Caco-2 (cell line): ENCODE measurements at regions of chr20 and their contacts with region 1.

Region 1: DNA sequence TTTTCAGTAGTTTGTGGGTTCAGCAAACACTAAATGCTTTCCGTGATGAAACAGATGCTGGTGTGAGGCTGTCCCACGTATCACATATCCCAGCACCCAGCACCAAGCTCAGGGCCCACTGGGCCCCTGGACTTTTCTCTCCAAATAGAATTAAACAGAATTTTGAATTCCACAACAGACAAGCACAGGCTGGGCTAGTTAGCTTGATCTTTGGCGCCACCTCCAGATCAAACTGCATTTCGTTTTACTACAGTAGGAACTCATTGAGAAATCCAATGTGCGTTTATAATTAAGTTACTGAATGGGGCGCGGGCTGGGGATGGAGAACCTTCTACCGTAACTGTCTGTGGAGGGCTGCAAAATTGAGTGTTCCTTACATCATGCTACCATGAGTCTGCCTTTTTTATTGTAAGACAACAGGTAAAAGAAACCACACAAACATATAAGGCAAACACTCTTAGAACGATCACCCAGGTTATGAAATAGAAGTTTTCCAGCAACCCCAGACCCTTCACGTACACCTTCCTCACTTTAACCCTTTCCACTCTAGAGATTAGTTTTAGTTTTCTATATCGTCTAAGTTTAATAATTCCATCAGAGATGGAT is 107.8 kb downstream of the ZFP64 start:
- DNase-seq: peak; percentile 86 to 87
- H3K4me3 ChIP-seq: no peak overlapping the region
- H3K4me3 Mint-ChIP-seq: no peak overlapping the region
- H3K27ac Mint-ChIP-seq: peak overlapping the region; percentile 23
- H3K4me1 ChIP-seq: peaks cover 11% of the 10 kb centered on the region
- H3K4me1 Mint-ChIP-seq: peaks cover 28% of the 10 kb centered on the region
- H3K27me3 ChIP-seq: no peaks in the 10 kb centered on the region
- H3K27me3 Mint-ChIP-seq: no peaks in the 10 kb centered on the region
- CTCF ChIP-seq: peak; percentile 95 to 96

Region 2: DNA sequence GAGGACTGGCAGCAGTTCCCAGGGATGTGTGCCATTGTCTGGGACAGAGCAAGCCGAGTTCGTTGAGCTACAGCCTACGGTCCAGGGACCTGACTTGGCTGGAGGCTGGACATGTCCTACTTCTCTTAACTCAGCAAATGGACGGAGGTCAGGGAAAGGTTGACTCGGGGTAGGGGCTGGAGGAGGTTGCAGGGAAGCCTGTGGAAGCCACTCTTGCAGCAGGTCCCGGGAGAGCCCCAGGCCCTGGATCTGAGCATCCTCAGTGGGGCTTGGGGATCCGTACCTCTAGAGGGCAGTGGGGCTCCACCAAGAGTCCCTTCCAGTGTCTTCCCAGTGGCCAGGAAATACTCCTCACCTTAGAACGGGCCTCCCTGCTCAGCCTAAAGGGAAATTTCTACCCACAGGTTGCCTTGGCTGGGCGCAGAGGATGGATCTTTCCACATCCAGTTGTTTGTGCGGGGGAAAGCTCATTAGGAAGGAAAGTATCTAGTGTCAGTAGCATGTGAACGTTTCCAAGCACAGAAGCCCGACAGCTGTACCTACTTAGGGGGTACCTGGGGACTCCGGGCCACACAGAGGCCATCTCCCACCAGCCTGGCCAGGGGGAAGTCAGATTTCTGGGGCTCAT is 711.4 kb before region 1 on chr20:
- CTCF ChIA-PET with region 1: interaction called, 4 read pairs
- POLR2A ChIA-PET with region 1: no interaction called
- intact Hi-C with region 1: loop called (anchors 1 kb)
- DNase-seq: peak; percentile 88 to 92
- H3K4me3 ChIP-seq: no peak overlapping the region
- H3K4me3 Mint-ChIP-seq: no peak overlapping the region
- H3K27ac Mint-ChIP-seq: no peak overlapping the region
- H3K4me1 ChIP-seq: peaks cover 14% of the 10 kb centered on the region
- H3K4me1 Mint-ChIP-seq: peaks cover 12% of the 10 kb centered on the region
- H3K27me3 ChIP-seq: no peaks in the 10 kb centered on the region
- H3K27me3 Mint-ChIP-seq: peaks cover 6% of the 10 kb centered on the region
- CTCF ChIP-seq: peak; percentile 99

Region 3: DNA sequence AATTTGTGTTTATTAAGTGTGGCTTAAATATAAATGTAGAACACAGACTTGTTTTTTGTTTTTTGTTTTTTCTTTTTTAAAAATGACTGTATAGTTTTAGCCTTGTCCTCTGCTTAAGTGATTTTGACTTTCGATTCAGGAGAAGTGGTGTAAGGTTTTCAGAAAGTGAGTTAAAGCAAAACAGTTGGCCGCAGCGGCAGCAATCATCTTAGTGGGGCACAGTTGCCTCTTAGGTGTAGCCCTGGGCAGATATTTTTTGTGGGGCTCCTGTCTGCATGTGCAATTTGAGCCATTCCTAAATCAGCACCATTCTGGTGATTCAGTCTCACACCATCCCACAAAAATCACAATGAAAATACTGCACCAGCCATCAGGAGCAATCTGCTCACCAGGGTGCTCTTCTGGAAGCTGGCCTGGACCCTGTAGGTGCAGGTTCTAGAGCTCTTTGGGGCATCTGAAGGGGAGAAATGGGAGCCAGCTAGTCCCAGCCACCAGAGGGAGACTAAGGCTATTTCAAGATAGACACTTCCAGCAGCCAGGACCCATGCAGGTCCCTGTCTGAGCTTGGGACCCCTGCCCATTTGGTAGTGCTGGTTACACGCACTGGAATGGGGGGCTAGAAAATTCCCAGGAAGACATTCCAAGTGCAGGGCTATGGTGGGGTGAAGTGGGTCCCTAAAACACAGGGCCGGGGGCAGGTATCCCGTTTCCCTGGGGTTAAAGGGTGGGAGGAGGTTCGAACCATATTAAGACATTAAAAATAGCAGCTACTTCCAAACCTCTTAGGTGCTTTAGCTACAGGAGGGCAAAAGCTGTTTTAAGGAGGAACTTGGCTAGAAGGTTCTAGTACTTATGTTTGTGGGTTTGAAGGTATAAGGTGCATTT is 697.8 kb before region 1 on chr20:
- CTCF ChIA-PET with region 1: no interaction called
- POLR2A ChIA-PET with region 1: no interaction called
- intact Hi-C with region 1: loop called (anchors 1 kb)
- DNase-seq: peak in 1 of 2 experiments; percentile 68
- H3K4me3 ChIP-seq: no peak overlapping the region
- H3K4me3 Mint-ChIP-seq: no peak overlapping the region
- H3K27ac Mint-ChIP-seq: no peak overlapping the region
- H3K4me1 ChIP-seq: peaks cover 14% of the 10 kb centered on the region
- H3K4me1 Mint-ChIP-seq: peaks cover 20% of the 10 kb centered on the region
- H3K27me3 ChIP-seq: no peaks in the 10 kb centered on the region
- H3K27me3 Mint-ChIP-seq: no peaks in the 10 kb centered on the region
- CTCF ChIP-seq: peak; percentile 81 to 88

Region 4: GRCh38 chr20:51624157-51624731 is 459.5 kb before region 1 on chr20:
- CTCF ChIA-PET with region 1: no interaction called
- POLR2A ChIA-PET with region 1: no interaction called
- intact Hi-C with region 1: loop called (anchors 5 kb)
- DNase-seq: peak; percentile 83 to 86
- H3K4me3 ChIP-seq: no peak overlapping the region
- H3K4me3 Mint-ChIP-seq: no peak overlapping the region
- H3K27ac Mint-ChIP-seq: no peak overlapping the region
- H3K4me1 ChIP-seq: peaks cover 3% of the 10 kb centered on the region; the same call in 1 of the 2 replicates
- H3K4me1 Mint-ChIP-seq: no peaks in the 10 kb centered on the region
- H3K27me3 ChIP-seq: no peaks in the 10 kb centered on the region
- H3K27me3 Mint-ChIP-seq: no peaks in the 10 kb centered on the region
- CTCF ChIP-seq: peak; percentile 85 to 97

Region 5: GRCh38 chr20:51966291-51966971 is 117.3 kb before region 1 on chr20:
- CTCF ChIA-PET with region 1: interaction called, 4 read pairs
- POLR2A ChIA-PET with region 1: no interaction called
- intact Hi-C with region 1: loop called (anchors 1 kb)
- DNase-seq: peak; percentile 87
- H3K4me3 ChIP-seq: no peak overlapping the region
- H3K4me3 Mint-ChIP-seq: no peak overlapping the region
- H3K27ac Mint-ChIP-seq: no peak overlapping the region
- H3K4me1 ChIP-seq: peaks cover 6% of the 10 kb centered on the region; the same call in 1 of the 2 replicates
- H3K4me1 Mint-ChIP-seq: peaks cover 11% of the 10 kb centered on the region
- H3K27me3 ChIP-seq: no peaks in the 10 kb centered on the region
- H3K27me3 Mint-ChIP-seq: no peaks in the 10 kb centered on the region
- CTCF ChIP-seq: peak; percentile 86 to 88